ENCODE measurements at regions of chr1 and their contacts with region 1.

Region 1: DNA sequence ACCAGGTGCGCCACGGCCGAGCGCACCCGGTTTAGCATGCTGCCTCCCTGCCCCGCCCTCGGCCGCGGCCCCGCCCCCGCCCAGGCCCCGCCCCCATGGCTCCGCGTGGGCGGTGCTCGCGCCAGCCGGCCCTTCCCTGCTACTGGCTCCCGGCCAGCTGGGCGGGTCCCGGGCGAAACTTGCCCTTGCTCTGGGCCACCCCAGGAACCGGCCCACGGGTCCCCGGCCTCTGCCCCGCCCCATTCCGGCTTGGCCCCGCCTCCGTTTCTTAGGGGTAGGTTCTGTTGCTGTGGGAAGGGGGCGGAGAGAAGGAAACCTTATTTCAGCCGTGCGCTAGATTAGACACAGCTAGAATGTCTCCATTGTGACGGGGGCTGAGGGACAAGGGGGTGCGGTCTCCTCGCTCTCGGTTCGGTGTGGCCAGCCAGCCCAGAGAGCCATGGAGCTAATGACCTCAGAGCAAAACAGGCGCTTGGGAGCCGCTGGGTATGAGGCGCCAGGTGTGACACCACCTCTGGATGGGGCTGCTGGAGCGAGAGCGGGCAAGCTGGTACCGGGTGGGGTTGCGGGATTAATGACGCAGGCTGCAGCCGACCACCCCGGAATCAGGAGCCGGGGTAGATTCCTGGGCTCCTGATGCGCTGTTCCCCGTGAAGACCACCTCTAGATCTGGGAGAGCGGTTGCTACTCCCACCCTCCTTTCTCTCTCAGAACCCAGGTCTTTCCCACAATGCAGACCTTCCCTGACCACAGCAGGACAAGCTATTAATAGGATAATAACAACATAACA is at the start of gene PPM1J:
- DNase-seq: peak; percentile 90 to 95 (median 92)
- H3K4me3 ChIP-seq: peak within 1 kb of the TSS; percentile 46 to 76 (median 57)
- H3K4me3 Mint-ChIP-seq: peak within 1 kb of the TSS; percentile 89 to 94
- H3K27ac ChIP-seq: no peak within 1 kb of the TSS
- H3K27ac Mint-ChIP-seq: peak within 1 kb of the TSS in 6 of 7 donors; percentile 40 to 80 (median 70)
- H3K4me1 ChIP-seq: peaks cover 32 to 38% of the 10 kb centered on the region in 2 donors
- H3K4me1 Mint-ChIP-seq: peaks cover 28% of the 10 kb centered on the region
- H3K27me3 ChIP-seq: peaks cover 0 to 14% of the 10 kb centered on the region in 2 donors
- H3K27me3 Mint-ChIP-seq: peaks cover 26 to 46% (median 32%) of the 10 kb centered on the region in 3 donors
- CTCF ChIP-seq: no peak
- polyA plus RNA-seq, gene PPM1J: 0.28 to 0.75 (median 0.69) TPM

Region 2: DNA sequence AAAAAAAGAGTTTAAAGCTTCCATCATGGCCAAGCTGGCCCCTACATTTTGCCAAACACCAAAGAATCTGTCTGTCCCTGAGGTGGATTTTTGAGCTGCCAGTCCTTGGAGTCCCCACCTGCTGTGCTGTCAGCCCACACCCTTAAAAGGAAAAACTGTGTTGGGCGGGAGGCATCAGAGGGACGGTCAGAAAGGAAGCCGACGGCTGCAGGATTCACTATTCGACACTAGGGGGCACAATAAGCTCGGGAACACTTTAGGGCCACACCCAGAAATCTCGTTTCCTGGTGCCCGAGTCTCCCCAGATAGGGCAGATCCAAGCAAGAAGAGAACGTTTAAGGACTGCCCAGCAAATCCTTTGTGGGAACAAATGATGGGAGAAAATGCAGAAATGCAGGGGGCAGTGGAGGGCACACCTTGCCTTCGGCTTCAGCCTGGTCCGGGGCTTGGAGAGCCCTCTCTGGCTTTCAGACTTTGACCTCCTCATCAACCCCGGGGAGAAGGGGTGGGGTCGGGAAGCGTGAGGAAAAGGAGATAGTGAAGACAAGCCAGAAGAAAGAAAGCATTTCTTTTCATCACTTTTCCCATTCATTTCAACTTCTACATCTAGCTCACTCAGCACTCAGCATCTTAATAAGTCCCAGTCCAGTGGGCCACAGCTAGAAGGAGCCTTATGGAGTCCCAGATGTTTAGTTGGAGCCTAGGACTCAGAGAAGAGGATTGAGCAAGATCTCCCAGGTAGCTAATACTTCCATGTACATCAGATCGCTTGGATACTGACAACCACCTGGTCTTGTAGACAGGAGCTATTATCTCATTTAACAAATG is 324.5 kb before region 1 on chr1:
- intact Hi-C with region 1: loop called in 1 of 2 experiments (anchors 5 kb)
- DNase-seq: peak; percentile 79 to 86 (median 83)
- H3K4me3 ChIP-seq: peak overlapping the region in 1 of 3 experiments; percentile 51
- H3K4me3 Mint-ChIP-seq: peak overlapping the region; percentile 57 to 60
- H3K27ac ChIP-seq: no peak overlapping the region
- H3K27ac Mint-ChIP-seq: peak overlapping the region in 2 of 7 donors; percentile 25 to 44
- H3K4me1 ChIP-seq: peaks cover 33 to 39% of the 10 kb centered on the region in 2 donors
- H3K4me1 Mint-ChIP-seq: peaks cover 30% of the 10 kb centered on the region
- H3K27me3 ChIP-seq: peaks cover 0 to 2% of the 10 kb centered on the region in 2 donors
- H3K27me3 Mint-ChIP-seq: peaks cover 3 to 13% (median 8%) of the 10 kb centered on the region in 3 donors
- CTCF ChIP-seq: peak; percentile 88

Region 3: DNA sequence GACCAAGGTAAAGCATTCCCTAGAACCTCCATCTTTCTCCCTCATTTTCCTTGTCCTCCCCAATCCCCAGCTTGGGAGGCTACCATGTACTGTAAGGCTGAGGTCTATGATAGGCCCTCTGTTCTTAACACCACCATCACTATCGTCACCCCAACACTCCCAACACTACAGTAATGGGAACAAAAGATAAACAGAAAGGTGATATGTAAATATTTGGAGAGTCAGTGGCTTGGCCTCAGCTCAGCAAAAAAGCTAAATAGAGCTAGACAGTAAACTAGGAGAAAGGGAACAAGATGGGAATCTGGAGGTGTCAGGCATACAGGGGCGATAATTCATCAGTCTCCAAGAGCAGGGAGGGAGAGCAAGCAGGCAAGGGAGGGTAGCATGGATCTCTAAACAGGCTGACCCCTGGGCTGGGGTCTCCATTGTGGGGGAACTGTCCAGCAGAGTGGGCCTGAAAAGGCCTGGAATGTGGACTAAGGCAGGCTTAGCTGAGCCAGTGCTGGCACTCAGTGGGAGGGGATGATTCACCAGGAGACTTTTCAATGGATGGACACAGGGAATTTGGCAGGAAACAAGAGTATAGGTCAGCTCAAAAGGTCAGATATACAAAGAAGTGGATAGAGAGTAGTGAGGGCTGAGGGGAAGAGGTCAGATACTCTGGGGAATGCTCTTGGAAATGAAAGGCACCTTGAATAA is 200.0 kb before region 1 on chr1:
- intact Hi-C with region 1: no loop called
- DNase-seq: no peak
- H3K4me3 ChIP-seq: no peak overlapping the region
- H3K4me3 Mint-ChIP-seq: no peak overlapping the region
- H3K27ac ChIP-seq: no peak overlapping the region
- H3K27ac Mint-ChIP-seq: peak overlapping the region in 1 of 7 donors; percentile 9
- H3K4me1 ChIP-seq: no peaks in the 10 kb centered on the region
- H3K4me1 Mint-ChIP-seq: peaks cover 6% of the 10 kb centered on the region
- H3K27me3 ChIP-seq: peaks cover 5 to 12% of the 10 kb centered on the region in 2 donors
- H3K27me3 Mint-ChIP-seq: peaks cover 8 to 16% (median 13%) of the 10 kb centered on the region in 3 donors
- CTCF ChIP-seq: no peak

Region 4: GRCh38 chr1:112809253-112809684 is 93.8 kb after region 1 on chr1:
- intact Hi-C with region 1: loop called (anchors 2 to 5 kb)
- DNase-seq: peak; percentile 36 to 56 (median 44)
- H3K4me3 ChIP-seq: no peak overlapping the region
- H3K4me3 Mint-ChIP-seq: no peak overlapping the region
- H3K27ac ChIP-seq: no peak overlapping the region
- H3K27ac Mint-ChIP-seq: no peak overlapping the region
- H3K4me1 ChIP-seq: no peaks in the 10 kb centered on the region
- H3K4me1 Mint-ChIP-seq: peaks cover 2% of the 10 kb centered on the region
- H3K27me3 ChIP-seq: no peaks in the 10 kb centered on the region
- H3K27me3 Mint-ChIP-seq: peaks cover 6 to 15% (median 7%) of the 10 kb centered on the region in 3 donors
- CTCF ChIP-seq: peak; percentile 93

Region 5: GRCh38 chr1:113072757-113073478 is 357.5 kb after region 1 on chr1 and contains the start of gene LRIG2:
- intact Hi-C with region 1: loop called in 1 of 2 experiments (anchors 5 kb)
- DNase-seq: peak; percentile 96 to 98 (median 96)
- H3K4me3 ChIP-seq: peak within 1 kb of the TSS; percentile 84 to 96 (median 85)
- H3K4me3 Mint-ChIP-seq: peak within 1 kb of the TSS; percentile 94 to 98
- H3K27ac ChIP-seq: peak within 1 kb of the TSS; percentile 86 to 95
- H3K27ac Mint-ChIP-seq: peak within 1 kb of the TSS; percentile 95 to 98 (median 97)
- H3K4me1 ChIP-seq: peaks cover 15 to 20% of the 10 kb centered on the region in 2 donors
- H3K4me1 Mint-ChIP-seq: peaks cover 30% of the 10 kb centered on the region
- H3K27me3 ChIP-seq: no peaks in the 10 kb centered on the region
- H3K27me3 Mint-ChIP-seq: no peaks in the 10 kb centered on the region
- CTCF ChIP-seq: peak; percentile 99
- polyA plus RNA-seq, gene LRIG2: 0.93 to 12.7 (median 0.96) TPM

Region 6: GRCh38 chr1:114282751-114283403 is 1567.4 kb after region 1 on chr1:
- intact Hi-C with region 1: loop called in 1 of 2 experiments (anchors 10 kb)
- DNase-seq: peak; percentile 75 to 81 (median 80)
- H3K4me3 ChIP-seq: no peak overlapping the region
- H3K4me3 Mint-ChIP-seq: no peak overlapping the region
- H3K27ac ChIP-seq: no peak overlapping the region
- H3K27ac Mint-ChIP-seq: no peak overlapping the region
- H3K4me1 ChIP-seq: no peaks in the 10 kb centered on the region
- H3K4me1 Mint-ChIP-seq: no peaks in the 10 kb centered on the region
- H3K27me3 ChIP-seq: no peaks in the 10 kb centered on the region
- H3K27me3 Mint-ChIP-seq: peaks cover 1 to 14% (median 5%) of the 10 kb centered on the region in 3 donors
- CTCF ChIP-seq: peak; percentile 86